Natural killer cell (primary cell): ENCODE measurements at regions of chr4 and their contacts with region 1.

Region 1: DNA sequence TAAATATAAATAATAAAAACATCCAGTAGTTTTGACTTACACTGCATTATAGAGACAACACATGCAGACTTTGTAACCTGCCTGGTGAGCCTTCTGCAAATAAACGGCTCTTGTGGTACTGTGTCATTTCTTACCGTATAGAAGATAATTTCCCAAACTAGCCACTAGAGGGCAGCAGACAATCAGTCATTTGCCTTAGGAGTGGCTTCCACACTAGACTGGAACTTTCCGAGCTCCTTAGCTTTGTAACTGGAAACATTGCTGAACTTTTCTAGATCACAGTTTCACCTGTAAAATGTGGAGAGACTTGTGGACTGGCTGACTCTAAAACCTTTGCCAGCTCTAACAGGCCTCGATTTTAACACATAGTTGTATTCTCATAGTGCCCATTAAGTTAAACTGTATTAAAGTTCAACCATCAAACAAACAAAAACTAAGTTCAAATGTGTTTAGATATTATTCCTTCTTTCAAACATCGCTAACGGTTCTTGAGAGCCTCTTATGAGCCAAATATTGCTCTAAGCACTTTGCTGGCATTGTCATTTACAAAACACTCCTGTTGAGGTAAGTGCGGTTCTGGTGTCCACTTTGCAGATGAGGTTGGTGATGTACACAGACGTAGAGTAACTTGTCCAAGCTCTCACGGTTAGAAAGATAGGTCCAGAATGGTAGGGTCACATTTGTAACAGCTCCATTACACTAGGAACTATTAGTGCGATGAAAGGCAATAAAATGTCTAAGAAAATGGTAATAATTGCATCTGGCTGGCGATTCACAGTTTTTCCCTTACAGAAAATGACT is 345.5 kb downstream of the ANK2 start:
- DNase-seq: peak in 1 of 2 donors; percentile 86
- ATAC-seq: peak; percentile 86 to 94 (median 88)
- H3K4me3 ChIP-seq: no peak overlapping the region
- H3K4me3 Mint-ChIP-seq: no peak overlapping the region
- H3K27ac ChIP-seq: no peak overlapping the region
- H3K27ac Mint-ChIP-seq: no peak overlapping the region
- H3K4me1 ChIP-seq: no peaks in the 10 kb centered on the region
- H3K4me1 Mint-ChIP-seq: no peaks in the 10 kb centered on the region
- H3K27me3 ChIP-seq: no peaks in the 10 kb centered on the region
- H3K27me3 Mint-ChIP-seq: peaks cover 0 to 9% of the 10 kb centered on the region in 2 donors
- CTCF ChIP-seq: peak; percentile 92

Region 2: GRCh38 chr4:113908829-113909228 is 513.9 kb after region 1 on chr4:
- intact Hi-C with region 1: loop called (anchors 2 kb)
- DNase-seq: peak in 1 of 2 donors; percentile 50
- ATAC-seq: no peak
- H3K4me3 ChIP-seq: no peak overlapping the region
- H3K4me3 Mint-ChIP-seq: no peak overlapping the region
- H3K27ac ChIP-seq: no peak overlapping the region
- H3K27ac Mint-ChIP-seq: no peak overlapping the region
- H3K4me1 ChIP-seq: no peaks in the 10 kb centered on the region
- H3K4me1 Mint-ChIP-seq: no peaks in the 10 kb centered on the region
- H3K27me3 ChIP-seq: peaks cover 2% of the 10 kb centered on the region
- H3K27me3 Mint-ChIP-seq: peaks cover 5 to 8% of the 10 kb centered on the region in 2 donors
- CTCF ChIP-seq: peak; percentile 40

Region 3: GRCh38 chr4:114180481-114180880 is 785.6 kb after region 1 on chr4:
- intact Hi-C with region 1: loop called (anchors 10 kb)
- DNase-seq: peak in 1 of 2 donors; percentile 61
- ATAC-seq: peak in 1 of 3 donors; percentile 44
- H3K4me3 ChIP-seq: no peak overlapping the region
- H3K4me3 Mint-ChIP-seq: no peak overlapping the region
- H3K27ac ChIP-seq: no peak overlapping the region
- H3K27ac Mint-ChIP-seq: no peak overlapping the region
- H3K4me1 ChIP-seq: no peaks in the 10 kb centered on the region
- H3K4me1 Mint-ChIP-seq: no peaks in the 10 kb centered on the region
- H3K27me3 ChIP-seq: no peaks in the 10 kb centered on the region
- H3K27me3 Mint-ChIP-seq: no peaks in the 10 kb centered on the region
- CTCF ChIP-seq: no peak

Region 4: DNA sequence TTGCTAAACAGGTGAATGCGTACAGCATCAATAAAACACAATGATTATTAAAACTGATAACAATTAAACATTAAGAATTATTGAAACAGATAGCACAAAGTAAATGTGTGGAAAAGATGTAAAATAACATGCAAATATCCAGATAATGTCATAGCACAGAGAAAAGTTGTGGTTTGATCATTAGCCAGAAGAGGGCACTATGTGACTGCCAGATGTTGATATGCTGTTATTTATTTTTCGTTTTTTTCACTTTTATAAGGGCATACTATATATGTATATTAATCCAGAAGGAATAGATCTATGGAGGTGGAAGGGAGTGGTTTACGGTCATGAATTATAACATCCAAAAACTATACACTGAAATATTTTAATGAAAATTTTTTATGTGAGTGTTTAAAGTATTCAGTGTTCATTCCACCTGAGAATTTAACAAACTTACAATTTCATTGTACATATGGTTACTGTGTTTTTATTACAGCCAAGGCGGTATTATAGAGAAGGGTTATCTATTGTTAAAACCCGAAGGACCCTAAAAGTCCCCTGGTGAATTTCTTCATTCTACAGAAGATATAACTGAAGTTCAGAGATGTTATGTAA is 991.8 kb after region 1 on chr4:
- intact Hi-C with region 1: loop called (anchors 10 kb)
- DNase-seq: peak in 1 of 2 donors; percentile 47
- ATAC-seq: no peak
- H3K4me3 ChIP-seq: no peak overlapping the region
- H3K4me3 Mint-ChIP-seq: no peak overlapping the region
- H3K27ac ChIP-seq: no peak overlapping the region
- H3K27ac Mint-ChIP-seq: no peak overlapping the region
- H3K4me1 ChIP-seq: no peaks in the 10 kb centered on the region
- H3K4me1 Mint-ChIP-seq: no peaks in the 10 kb centered on the region
- H3K27me3 ChIP-seq: no peaks in the 10 kb centered on the region
- H3K27me3 Mint-ChIP-seq: peaks cover 0 to 7% of the 10 kb centered on the region in 2 donors
- CTCF ChIP-seq: peak; percentile 24

Region 5: DNA sequence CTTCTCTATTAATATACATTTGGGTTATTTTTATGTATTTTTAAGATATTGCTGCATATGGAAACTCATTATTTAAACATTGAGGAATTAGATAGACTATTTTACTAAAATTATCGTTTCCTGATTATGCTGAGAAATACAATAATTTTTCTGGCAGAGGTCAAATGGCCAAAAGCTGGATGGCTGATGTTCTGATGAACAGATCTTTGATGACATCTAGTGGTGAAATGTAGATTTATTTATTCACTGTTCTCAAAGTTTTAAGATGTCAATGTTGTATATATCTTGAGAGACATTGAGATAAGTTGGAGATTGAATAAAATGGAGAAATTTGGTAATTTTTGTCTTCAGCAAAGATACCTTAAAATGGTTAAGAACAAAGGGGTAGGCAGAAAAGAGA is 1299.8 kb after region 1 on chr4:
- intact Hi-C with region 1: loop called (anchors 2 kb)
- DNase-seq: peak in 1 of 2 donors; percentile 44
- ATAC-seq: no peak
- H3K4me3 ChIP-seq: no peak overlapping the region
- H3K4me3 Mint-ChIP-seq: no peak overlapping the region
- H3K27ac ChIP-seq: no peak overlapping the region
- H3K27ac Mint-ChIP-seq: no peak overlapping the region
- H3K4me1 ChIP-seq: no peaks in the 10 kb centered on the region
- H3K4me1 Mint-ChIP-seq: no peaks in the 10 kb centered on the region
- H3K27me3 ChIP-seq: no peaks in the 10 kb centered on the region
- H3K27me3 Mint-ChIP-seq: peaks cover 0 to 7% of the 10 kb centered on the region in 2 donors
- CTCF ChIP-seq: peak; percentile 60

Region 6: DNA sequence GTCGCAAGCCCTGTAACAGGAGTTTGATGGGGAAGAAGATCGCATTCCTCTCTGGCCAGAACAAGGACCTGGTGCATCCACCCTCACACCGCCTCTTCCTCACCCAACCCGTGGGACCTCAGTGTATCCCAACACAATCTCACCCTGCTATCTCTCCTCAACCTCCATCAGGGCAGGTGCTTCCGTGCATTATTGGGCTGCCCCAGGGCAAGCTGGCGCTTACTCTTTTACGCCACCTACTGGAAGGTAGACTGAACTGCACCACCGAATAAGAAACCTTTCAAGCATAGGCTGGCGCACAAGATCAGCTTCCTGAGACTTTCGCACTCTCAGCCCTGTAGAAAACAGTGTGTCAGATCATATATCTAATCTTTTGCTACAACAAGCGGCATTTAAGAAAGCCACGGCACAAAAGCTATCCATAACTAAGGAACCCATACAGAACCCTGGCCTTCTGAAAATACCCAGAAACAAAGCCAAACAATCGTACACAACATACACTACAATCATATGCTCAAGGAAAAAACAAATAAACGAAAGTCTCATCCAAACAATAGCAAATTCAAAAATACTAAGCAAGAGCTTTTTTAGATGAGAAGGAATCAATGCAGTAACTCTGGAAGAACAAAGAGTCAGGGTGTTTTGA is 1413.0 kb after region 1 on chr4:
- intact Hi-C with region 1: loop called (anchors 10 kb)
- DNase-seq: peak in 1 of 2 donors; percentile 41
- ATAC-seq: peak; percentile 48 to 85 (median 72)
- H3K4me3 ChIP-seq: no peak overlapping the region
- H3K4me3 Mint-ChIP-seq: no peak overlapping the region
- H3K27ac ChIP-seq: no peak overlapping the region
- H3K27ac Mint-ChIP-seq: no peak overlapping the region
- H3K4me1 ChIP-seq: no peaks in the 10 kb centered on the region
- H3K4me1 Mint-ChIP-seq: peaks cover 4 to 7% of the 10 kb centered on the region in 2 donors
- H3K27me3 ChIP-seq: no peaks in the 10 kb centered on the region
- H3K27me3 Mint-ChIP-seq: peaks cover 0 to 3% of the 10 kb centered on the region in 2 donors
- CTCF ChIP-seq: peak; percentile 51